Activated naive CD4-positive, alpha-beta T cell treated with anti-CD3 and anti-CD28 coated beads for 36 hours (primary cell): ENCODE measurements at regions of chr10 and their contacts with region 1.

Region 1: DNA sequence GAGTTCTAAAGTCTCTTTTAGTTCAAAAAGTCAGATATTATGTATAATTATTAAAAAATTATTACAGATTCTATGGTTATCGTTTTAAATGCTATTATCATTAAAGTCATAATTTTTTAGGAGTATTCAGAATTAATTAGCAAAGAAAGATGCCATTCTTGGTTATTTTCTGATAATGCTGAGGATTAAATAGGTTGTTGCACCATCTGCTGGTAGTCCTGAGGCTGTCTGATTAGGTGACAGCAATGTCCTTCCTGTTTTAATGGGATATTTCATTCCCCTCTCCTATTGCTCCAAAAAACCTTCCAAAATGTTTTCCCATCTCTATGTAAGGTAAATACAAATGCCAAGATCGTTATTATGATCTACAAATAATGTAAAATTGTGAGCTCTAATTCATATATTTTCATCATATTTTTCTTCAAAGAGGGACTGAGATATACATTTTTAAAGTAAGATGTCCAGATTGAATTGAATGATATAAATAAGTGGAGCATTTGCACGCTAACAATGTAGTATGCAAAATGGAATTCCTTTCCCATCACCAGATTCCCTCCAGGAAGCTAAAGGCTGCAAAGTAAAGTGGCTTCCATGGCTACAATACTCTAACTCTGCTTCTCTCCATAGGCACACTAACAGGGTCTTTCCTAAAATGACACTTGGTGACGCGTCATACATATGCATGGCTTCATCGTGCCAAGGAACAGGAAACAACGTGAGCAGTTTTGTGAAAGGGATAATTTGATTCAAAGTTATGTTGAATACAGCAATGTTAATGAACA is 58.8 kb upstream of the AKR1E2 start:
- DNase-seq: peak; percentile 17
- H3K4me3 Mint-ChIP-seq: no peak overlapping the region
- H3K27ac Mint-ChIP-seq: no peak overlapping the region
- H3K4me1 Mint-ChIP-seq: peaks cover 3% of the 10 kb centered on the region
- H3K27me3 Mint-ChIP-seq: peaks cover 11% of the 10 kb centered on the region

Region 2: GRCh38 chr10:3197348-3198003 is 1569.7 kb before region 1 on chr10:
- CTCF ChIA-PET with region 1: interaction called, 5 read pairs
- intact Hi-C with region 1: loop called (anchors 5 kb)
- DNase-seq: peak; percentile 84
- H3K4me3 Mint-ChIP-seq: no peak overlapping the region
- H3K27ac Mint-ChIP-seq: no peak overlapping the region
- H3K4me1 Mint-ChIP-seq: peaks cover 10% of the 10 kb centered on the region
- H3K27me3 Mint-ChIP-seq: peaks cover 41% of the 10 kb centered on the region

Region 3: GRCh38 chr10:3239066-3239919 is 1527.9 kb before region 1 on chr10:
- CTCF ChIA-PET with region 1: interaction called, 3 read pairs
- intact Hi-C with region 1: loop called (anchors 1 kb)
- DNase-seq: peak; percentile 81
- H3K4me3 Mint-ChIP-seq: no peak overlapping the region
- H3K27ac Mint-ChIP-seq: no peak overlapping the region
- H3K4me1 Mint-ChIP-seq: peaks cover 3% of the 10 kb centered on the region
- H3K27me3 Mint-ChIP-seq: peaks cover 33% of the 10 kb centered on the region

Region 4: DNA sequence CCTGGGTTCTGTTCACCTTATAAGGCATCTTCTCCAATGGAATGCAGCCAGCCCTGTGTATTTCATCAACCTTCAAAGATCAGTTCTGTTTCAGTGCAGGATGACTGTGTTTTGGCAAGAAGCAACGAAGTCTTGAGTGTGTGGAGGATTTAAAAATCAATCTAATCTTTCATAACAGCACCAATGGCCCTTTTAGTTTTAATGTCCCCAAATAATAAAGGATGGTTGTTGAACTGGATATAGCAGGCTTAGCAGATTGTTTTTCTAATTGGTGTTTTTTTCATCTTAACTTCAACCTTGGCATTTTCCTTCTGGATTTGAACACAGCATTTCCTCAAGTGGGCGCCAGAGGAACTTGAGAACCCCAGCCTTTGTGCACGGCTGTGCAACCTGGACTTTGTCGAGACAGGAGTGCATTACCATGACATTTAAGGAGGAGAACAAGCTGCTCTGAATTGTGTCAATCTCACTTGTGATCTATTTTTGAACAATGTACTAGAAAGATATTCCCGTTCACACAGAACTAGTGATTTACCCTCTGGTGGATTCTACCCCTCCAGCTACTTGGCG is 254.5 kb before region 1 on chr10:
- CTCF ChIA-PET with region 1: interaction called, 3 read pairs
- intact Hi-C with region 1: loop called (anchors 5 kb)
- DNase-seq: peak; percentile 41
- H3K4me3 Mint-ChIP-seq: no peak overlapping the region
- H3K27ac Mint-ChIP-seq: no peak overlapping the region
- H3K4me1 Mint-ChIP-seq: peaks cover 9% of the 10 kb centered on the region
- H3K27me3 Mint-ChIP-seq: peaks cover 20% of the 10 kb centered on the region

Region 5: GRCh38 chr10:4686644-4686996 is 80.6 kb before region 1 on chr10:
- CTCF ChIA-PET with region 1: no interaction called
- intact Hi-C with region 1: loop called (anchors 10 kb)
- DNase-seq: peak; percentile 44
- H3K4me3 Mint-ChIP-seq: no peak overlapping the region
- H3K27ac Mint-ChIP-seq: peak overlapping the region; percentile 40
- H3K4me1 Mint-ChIP-seq: peaks cover 43% of the 10 kb centered on the region
- H3K27me3 Mint-ChIP-seq: peaks cover 9% of the 10 kb centered on the region